ENCODE measurements at regions of chr11 and their contacts with region 1.

Region 1: GRCh38 chr11:44627911-44628729 is 62.7 kb downstream of the CD82 start:
- DNase-seq: peak; percentile 84 to 90 (median 85)
- ATAC-seq: peak; percentile 76 to 87 (median 84)
- H3K4me3 ChIP-seq: no peak overlapping the region
- H3K27ac ChIP-seq: peak overlapping the region; percentile 42 to 87 (median 76)
- H3K4me1 ChIP-seq: peaks cover 7 to 64% (median 38%) of the 10 kb centered on the region in 12 donors
- H3K27me3 ChIP-seq: no peaks in the 10 kb centered on the region
- CTCF ChIP-seq: peak in 4 of 12 donors; percentile 9 to 19 (median 12)
- POLR2A ChIP-seq: no peak

Region 2: GRCh38 chr11:44899959-44900358 is 271.8 kb after region 1 on chr11:
- intact Hi-C with region 1: loop called in 2 of 10 experiments (anchors 2 to 5 kb)
- DNase-seq: peak in 2 of 5 donors; percentile 28 to 60
- ATAC-seq: peak; percentile 29 to 62 (median 56)
- H3K4me3 ChIP-seq: no peak overlapping the region
- H3K27ac ChIP-seq: no peak overlapping the region
- H3K4me1 ChIP-seq: peaks cover 0 to 7% (median 0%) of the 10 kb centered on the region in 12 donors
- H3K27me3 ChIP-seq: no peaks in the 10 kb centered on the region
- CTCF ChIP-seq: no peak
- POLR2A ChIP-seq: no peak

Measured in heart left ventricle (tissue), 16 donors.